Esophagus muscularis mucosa (tissue), 4 donors: ENCODE measurements at regions of chr20 and their contacts with region 1.

Region 1: GRCh38 chr20:19692685-19693119 is 65.4 kb upstream of the RIN2 start:
- DNase-seq: no peak
- H3K4me3 ChIP-seq: peak overlapping the region in 2 of 4 donors; percentile 2 to 21
- H3K27ac ChIP-seq: no peak overlapping the region
- H3K4me1 ChIP-seq: peaks cover 11 to 24% (median 15%) of the 10 kb centered on the region in 4 donors
- H3K27me3 ChIP-seq: no peaks in the 10 kb centered on the region
- CTCF ChIP-seq: peak; percentile 86 to 97 (median 89)
- EP300 ChIP-seq: no peak
- POLR2A ChIP-seq: no peak

Region 2: DNA sequence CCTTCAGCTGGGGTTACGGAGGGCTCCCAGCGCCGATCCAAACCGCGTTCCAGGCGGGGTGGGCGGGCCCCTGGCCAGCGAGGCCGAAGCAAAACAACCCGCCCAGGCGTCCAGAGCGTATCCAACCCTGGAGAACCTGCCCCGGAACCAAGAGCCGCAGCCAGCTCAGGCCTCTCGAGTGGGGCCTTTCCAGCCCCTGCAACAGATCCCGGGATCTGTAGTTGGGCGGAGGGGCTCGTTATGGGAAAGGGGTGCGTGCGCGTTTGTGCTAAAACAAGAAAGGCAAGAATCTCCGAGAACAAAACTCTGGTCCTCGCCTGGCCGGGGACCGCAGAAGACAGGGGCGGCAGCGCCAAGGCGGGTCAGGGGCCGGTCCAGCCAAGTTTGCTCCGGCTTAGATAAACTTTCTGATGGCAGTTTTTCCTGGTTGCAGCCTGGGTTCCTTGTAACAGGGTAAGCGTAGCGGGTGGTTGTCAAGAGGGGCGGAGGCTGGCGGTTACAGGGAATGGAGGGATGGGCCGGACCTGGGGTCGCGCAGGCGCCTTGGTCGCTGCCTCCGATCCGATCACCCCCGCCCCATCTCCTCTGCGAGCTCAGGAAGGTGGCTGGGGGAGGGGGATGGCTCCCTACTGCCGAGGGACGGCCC is 64.9 kb after region 1 on chr20:
- intact Hi-C with region 1: loop called (anchors 5 kb)
- DNase-seq: peak; percentile 95
- H3K4me3 ChIP-seq: peak overlapping the region; percentile 81 to 93 (median 90)
- H3K27ac ChIP-seq: peak overlapping the region; percentile 87 to 92 (median 90)
- H3K4me1 ChIP-seq: peaks cover 40 to 51% (median 47%) of the 10 kb centered on the region in 4 donors
- H3K27me3 ChIP-seq: no peaks in the 10 kb centered on the region
- CTCF ChIP-seq: no peak
- EP300 ChIP-seq: no peak
- POLR2A ChIP-seq: peak; percentile 11

Region 3: GRCh38 chr20:19784511-19785172 is 91.9 kb after region 1 on chr20:
- intact Hi-C with region 1: loop called (anchors 5 kb)
- DNase-seq: no peak
- H3K4me3 ChIP-seq: peak overlapping the region in 1 of 4 donors; percentile 3
- H3K27ac ChIP-seq: peak overlapping the region; percentile 1 to 57 (median 48)
- H3K4me1 ChIP-seq: peaks cover 30 to 34% (median 33%) of the 10 kb centered on the region in 4 donors
- H3K27me3 ChIP-seq: no peaks in the 10 kb centered on the region
- CTCF ChIP-seq: peak; percentile 79 to 86 (median 85)
- EP300 ChIP-seq: no peak
- POLR2A ChIP-seq: no peak

Region 4: GRCh38 chr20:19995220-19995863 is 302.6 kb after region 1 on chr20:
- intact Hi-C with region 1: loop called (anchors 5 kb)
- DNase-seq: no peak
- H3K4me3 ChIP-seq: no peak overlapping the region
- H3K27ac ChIP-seq: peak overlapping the region; percentile 14 to 81 (median 74)
- H3K4me1 ChIP-seq: peaks cover 63 to 78% (median 69%) of the 10 kb centered on the region in 4 donors
- H3K27me3 ChIP-seq: no peaks in the 10 kb centered on the region
- CTCF ChIP-seq: peak; percentile 82 to 85 (median 85)
- EP300 ChIP-seq: no peak
- POLR2A ChIP-seq: no peak